Heart right ventricle (tissue), 16 donors: ENCODE measurements at regions of chr21 and their contacts with region 1.

Region 1: DNA sequence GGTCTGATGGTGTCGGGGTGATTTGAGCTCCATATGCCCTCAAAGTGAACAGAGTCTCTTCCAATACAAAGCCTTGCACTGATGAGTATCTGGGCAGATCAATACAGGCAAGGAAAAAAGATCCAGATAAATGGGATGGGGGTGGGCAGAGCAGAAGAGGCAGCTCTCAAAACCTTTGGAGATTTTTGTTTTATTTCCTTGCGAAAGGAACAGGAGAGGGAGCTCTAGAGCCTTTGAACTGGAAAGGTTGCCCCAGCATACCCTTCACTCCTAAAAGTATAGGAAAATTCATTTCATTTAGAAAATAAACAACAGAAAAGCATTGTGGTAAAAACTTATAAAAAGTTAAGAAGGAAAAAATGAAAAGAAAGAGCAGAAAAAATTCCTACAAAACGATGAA is 31.4 kb upstream of the OLIG2 start:
- DNase-seq: no peak
- ATAC-seq: no peak
- H3K4me3 ChIP-seq: no peak overlapping the region
- H3K27ac ChIP-seq: no peak overlapping the region
- H3K4me1 ChIP-seq: no peaks in the 10 kb centered on the region
- H3K27me3 ChIP-seq: peaks cover 0 to 32% (median 16%) of the 10 kb centered on the region in 7 donors
- CTCF ChIP-seq: peak in 7 of 9 donors; percentile 8 to 57 (median 46)

Region 2: GRCh38 chr21:32958288-32959002 is 35.9 kb before region 1 on chr21:
- intact Hi-C with region 1: no loop called
- DNase-seq: no peak
- ATAC-seq: no peak
- H3K4me3 ChIP-seq: no peak overlapping the region
- H3K27ac ChIP-seq: no peak overlapping the region
- H3K4me1 ChIP-seq: no peaks in the 10 kb centered on the region
- H3K27me3 ChIP-seq: peaks cover 0 to 95% (median 72%) of the 10 kb centered on the region in 7 donors
- CTCF ChIP-seq: no peak

Region 3: DNA sequence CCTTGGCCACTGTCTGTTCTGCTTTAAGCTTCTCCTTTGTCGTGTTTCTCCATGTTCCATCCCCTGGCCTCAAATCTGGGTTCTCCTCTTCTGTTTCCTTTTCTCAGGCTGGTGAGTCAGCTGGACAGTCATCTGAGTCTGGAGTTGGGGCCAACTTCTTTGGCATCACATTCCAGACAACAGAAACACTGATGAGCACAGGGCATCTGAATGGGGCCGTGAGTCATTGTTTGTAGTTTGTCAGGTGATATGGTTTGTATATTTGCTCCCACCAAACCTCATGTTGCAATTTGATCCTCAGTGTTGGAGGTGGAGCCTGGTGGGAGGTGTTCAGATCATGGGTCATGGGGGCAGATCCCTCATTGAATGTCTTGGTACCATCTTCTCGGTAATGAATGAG is 17.2 kb after region 1 on chr21:
- intact Hi-C with region 1: loop called in 1 of 10 experiments (anchors 2 kb)
- DNase-seq: no peak
- ATAC-seq: no peak
- H3K4me3 ChIP-seq: no peak overlapping the region
- H3K27ac ChIP-seq: no peak overlapping the region
- H3K4me1 ChIP-seq: peaks cover 0 to 24% (median 0%) of the 10 kb centered on the region in 9 donors
- H3K27me3 ChIP-seq: peaks cover 0 to 77% (median 38%) of the 10 kb centered on the region in 7 donors
- CTCF ChIP-seq: no peak

Region 4: DNA sequence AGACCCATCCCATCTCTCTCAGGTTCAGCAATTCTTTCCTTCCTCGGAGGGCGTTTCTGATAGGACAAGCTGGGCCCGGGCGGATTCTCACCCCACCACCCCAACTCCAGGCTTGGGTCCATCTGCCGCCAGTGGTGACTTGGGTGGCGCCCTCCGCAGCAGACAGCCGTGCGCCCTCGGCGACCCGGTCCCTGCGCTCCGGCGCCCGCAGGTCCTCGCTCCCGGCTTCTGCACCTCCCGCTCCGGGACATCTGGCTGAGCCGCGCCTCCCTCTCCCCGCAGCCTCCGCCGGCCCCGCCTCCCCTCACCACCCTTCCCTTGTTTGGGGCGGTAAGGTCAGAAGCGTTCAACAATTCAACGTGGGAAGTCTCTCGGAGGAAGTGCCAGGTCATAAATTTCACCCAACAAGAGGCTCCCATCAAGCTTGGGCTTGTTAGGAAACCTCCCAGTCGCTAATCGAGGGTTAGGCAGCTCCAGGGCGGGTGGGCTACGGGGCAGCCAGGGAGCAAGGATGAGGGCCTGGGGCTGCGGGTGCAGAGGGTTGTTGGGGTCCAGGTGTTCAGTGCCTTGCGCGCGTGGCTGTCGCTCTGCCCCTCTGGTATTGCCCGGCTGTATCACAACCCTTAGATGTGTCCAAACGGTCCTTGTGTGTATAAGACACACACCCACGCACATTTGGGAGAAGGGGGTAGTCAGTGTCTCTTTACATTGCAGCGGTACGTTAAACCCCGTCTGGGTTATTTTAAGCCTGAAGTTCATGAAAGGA is 115.5 kb after region 1 on chr21:
- intact Hi-C with region 1: no loop called
- DNase-seq: no peak
- ATAC-seq: no peak
- H3K4me3 ChIP-seq: peak overlapping the region in 2 of 10 donors; percentile 5 to 22
- H3K27ac ChIP-seq: no peak overlapping the region
- H3K4me1 ChIP-seq: peaks cover 0 to 8% (median 0%) of the 10 kb centered on the region in 9 donors
- H3K27me3 ChIP-seq: peaks cover 8 to 94% (median 81%) of the 10 kb centered on the region in 7 donors
- CTCF ChIP-seq: no peak

Region 5: GRCh38 chr21:33185852-33186251 is 191.5 kb after region 1 on chr21:
- intact Hi-C with region 1: loop called in 3 of 10 experiments (anchors 10 kb)
- DNase-seq: no peak
- ATAC-seq: peak in 1 of 8 donors; percentile 22
- H3K4me3 ChIP-seq: no peak overlapping the region
- H3K27ac ChIP-seq: peak overlapping the region in 1 of 10 donors; percentile 66
- H3K4me1 ChIP-seq: peaks cover 0 to 24% (median 6%) of the 10 kb centered on the region in 9 donors
- H3K27me3 ChIP-seq: peaks cover 0 to 23% (median 0%) of the 10 kb centered on the region in 7 donors
- CTCF ChIP-seq: no peak